ENCODE measurements at regions of chr11 and their contacts with region 1.

Region 1: GRCh38 chr11:10735481-10736475 is 15.3 kb upstream of the CTR9 start:
- DNase-seq: peak; percentile 96 to 98 (median 98)
- H3K4me3 ChIP-seq: peak overlapping the region in 1 of 4 donors; percentile 6
- H3K27ac ChIP-seq: peak overlapping the region in 4 of 5 donors; percentile 46 to 88 (median 82)
- H3K4me1 ChIP-seq: peaks cover 5 to 6% of the 10 kb centered on the region in 2 donors
- H3K27me3 ChIP-seq: no peaks in the 10 kb centered on the region
- CTCF ChIP-seq: peak; percentile 97 to 100 (median 100)
- POLR2A ChIP-seq: peak in 1 of 2 donors; percentile 5

Region 2: DNA sequence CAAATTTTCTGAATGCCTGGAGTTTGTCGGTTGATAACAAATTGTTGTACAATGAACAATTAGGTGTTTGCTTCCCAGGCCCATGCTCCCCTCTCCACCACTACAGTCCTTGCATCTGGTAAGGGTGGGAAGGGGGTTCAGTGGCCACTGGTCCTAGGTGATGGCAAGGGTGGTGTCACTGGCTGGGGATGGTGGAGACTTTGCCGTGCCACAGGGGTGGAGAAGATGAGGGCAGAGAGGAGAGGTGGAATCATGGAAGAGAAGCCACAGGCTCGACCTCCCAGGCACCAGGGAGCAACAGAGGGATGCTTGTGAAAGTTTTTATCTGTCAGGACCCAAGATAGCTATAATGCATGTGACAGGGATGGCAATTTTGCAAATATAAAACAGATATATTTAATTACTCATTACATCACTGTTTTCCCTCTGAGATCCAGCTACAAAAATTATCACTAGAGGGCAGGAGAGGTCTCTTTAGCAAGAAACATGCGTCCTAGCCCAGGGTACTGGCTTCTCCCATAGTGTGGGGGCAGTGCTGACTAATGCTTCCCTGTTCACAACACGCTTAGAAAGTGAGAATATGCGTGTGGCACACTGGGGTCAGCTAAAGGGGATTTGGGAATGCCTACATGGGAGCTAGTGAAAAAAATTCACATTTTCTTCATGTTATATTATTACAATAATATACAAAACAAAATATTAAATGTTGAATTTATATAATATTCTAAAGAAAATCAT is 329.8 kb before region 1 on chr11:
- intact Hi-C with region 1: loop called (anchors 5 kb)
- DNase-seq: peak; percentile 73 to 90 (median 81)
- H3K4me3 ChIP-seq: no peak overlapping the region
- H3K27ac ChIP-seq: no peak overlapping the region
- H3K4me1 ChIP-seq: peaks cover 17 to 29% of the 10 kb centered on the region in 2 donors
- H3K27me3 ChIP-seq: no peaks in the 10 kb centered on the region
- CTCF ChIP-seq: peak; percentile 39 to 84 (median 77)
- POLR2A ChIP-seq: no peak

Region 3: GRCh38 chr11:10564696-10565318 is 171.0 kb before region 1 on chr11:
- intact Hi-C with region 1: loop called in 1 of 2 experiments (anchors 10 kb)
- DNase-seq: peak in 6 of 7 donors; percentile 52 to 75 (median 63)
- H3K4me3 ChIP-seq: no peak overlapping the region
- H3K27ac ChIP-seq: peak overlapping the region in 4 of 5 donors; percentile 35 to 90 (median 66)
- H3K4me1 ChIP-seq: peaks cover 18 to 28% of the 10 kb centered on the region in 2 donors
- H3K27me3 ChIP-seq: no peaks in the 10 kb centered on the region
- CTCF ChIP-seq: peak; percentile 43 to 76 (median 68)
- POLR2A ChIP-seq: no peak

Region 4: DNA sequence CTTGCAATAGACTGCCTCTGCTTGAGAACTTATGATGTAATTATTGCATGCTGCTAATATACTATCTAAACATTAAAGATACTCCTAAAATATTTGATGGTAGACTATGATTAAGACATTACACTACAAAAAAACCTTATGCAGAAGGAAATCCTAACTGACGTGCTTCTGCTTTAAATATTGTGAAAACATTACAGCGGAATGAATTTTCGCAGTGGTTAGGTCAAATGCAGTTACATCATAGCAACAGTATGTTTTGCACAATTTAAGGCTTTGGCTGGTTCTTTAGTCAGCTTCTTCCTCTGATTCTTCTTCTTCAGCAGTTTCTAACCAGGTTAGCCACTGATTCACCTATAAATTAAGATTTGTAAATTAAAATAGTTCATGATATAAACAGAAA is 61.8 kb after region 1 on chr11:
- intact Hi-C with region 1: no loop called
- DNase-seq: no peak
- H3K4me3 ChIP-seq: no peak overlapping the region
- H3K27ac ChIP-seq: no peak overlapping the region
- H3K4me1 ChIP-seq: peaks cover 0 to 2% of the 10 kb centered on the region in 2 donors
- H3K27me3 ChIP-seq: no peaks in the 10 kb centered on the region
- CTCF ChIP-seq: no peak
- POLR2A ChIP-seq: no peak

Measured in adrenal gland (tissue), 19 donors.